A673 (cell line): ENCODE measurements at regions of chr2 and their contacts with region 1.

Region 1: DNA sequence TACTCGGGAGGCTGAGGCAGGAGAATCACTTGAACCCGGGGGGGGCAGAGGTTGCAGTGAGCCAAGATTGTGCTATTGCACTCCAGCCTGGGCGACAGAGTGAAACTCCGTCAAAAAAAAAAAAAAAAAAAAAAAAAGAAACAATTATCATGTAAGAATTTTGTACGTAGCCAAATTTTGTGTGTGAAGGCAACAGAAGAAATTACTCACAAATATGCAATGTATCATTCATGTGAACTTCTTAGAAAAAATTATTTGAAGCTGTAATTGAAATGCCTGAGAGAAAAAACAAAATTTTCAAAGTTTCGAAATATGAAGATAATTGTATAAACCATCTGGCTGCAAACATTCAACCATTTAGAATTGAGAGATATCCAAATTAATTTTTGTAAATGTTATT is 204.8 kb upstream of the PARD3B start:
- DNase-seq: no peak
- H3K4me3 ChIP-seq: no peak overlapping the region
- H3K27ac ChIP-seq: no peak overlapping the region
- H3K4me1 ChIP-seq: no peaks in the 10 kb centered on the region
- H3K27me3 ChIP-seq: no peaks in the 10 kb centered on the region
- CTCF ChIP-seq: no peak

Region 2: DNA sequence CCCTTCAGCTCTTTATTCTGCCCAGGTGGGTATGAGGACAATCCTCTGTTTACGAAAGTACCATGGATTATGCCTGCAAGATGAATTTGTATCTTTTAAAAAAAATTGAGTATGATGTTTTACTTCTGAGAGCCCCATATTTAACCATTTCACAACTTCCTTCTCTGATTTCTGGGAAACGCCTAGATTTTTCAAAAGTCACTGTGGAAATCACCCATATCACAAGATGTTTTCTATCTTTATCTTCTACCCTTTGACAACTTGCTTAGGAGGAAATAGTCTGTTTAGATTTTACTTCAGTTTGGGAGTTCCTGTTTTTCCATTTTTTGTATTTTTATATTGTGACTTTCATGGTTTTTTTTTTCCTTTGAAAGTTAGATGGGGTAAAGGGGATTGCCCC is 351.0 kb before region 1 on chr2:
- CTCF ChIA-PET with region 1: no interaction called
- POLR2A ChIA-PET with region 1: interaction called, 20 read pairs
- intact Hi-C with region 1: no loop called
- DNase-seq: no peak
- H3K4me3 ChIP-seq: no peak overlapping the region
- H3K27ac ChIP-seq: no peak overlapping the region
- H3K4me1 ChIP-seq: no peaks in the 10 kb centered on the region
- H3K27me3 ChIP-seq: no peaks in the 10 kb centered on the region
- CTCF ChIP-seq: no peak

Region 3: DNA sequence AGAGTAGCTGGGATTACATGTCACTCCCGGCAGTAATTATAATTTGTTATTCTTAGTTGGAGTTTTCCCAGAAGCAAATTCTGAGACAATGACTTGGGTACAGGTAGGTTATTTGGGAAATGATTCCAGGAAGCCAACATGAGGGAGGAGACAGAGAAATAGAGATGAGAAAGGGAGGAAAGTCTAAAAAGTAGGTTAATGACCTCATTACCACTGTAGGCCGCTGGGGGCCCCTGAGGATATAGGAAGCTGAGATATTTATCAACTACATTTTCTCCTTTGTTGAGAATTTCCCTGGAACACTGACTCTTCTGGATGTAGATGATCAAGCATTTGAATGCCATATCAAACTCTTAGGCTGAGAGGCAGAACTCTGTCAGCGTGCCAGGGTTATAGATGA is 119.6 kb before region 1 on chr2:
- CTCF ChIA-PET with region 1: no interaction called
- POLR2A ChIA-PET with region 1: no interaction called
- intact Hi-C with region 1: no loop called
- DNase-seq: no peak
- H3K4me3 ChIP-seq: no peak overlapping the region
- H3K27ac ChIP-seq: no peak overlapping the region
- H3K4me1 ChIP-seq: peaks cover 6% of the 10 kb centered on the region
- H3K27me3 ChIP-seq: no peaks in the 10 kb centered on the region
- CTCF ChIP-seq: no peak